Natural killer cell (primary cell): ENCODE measurements at regions of chr22 and their contacts with region 1.

Region 1: GRCh38 chr22:20211997-20212753 is 55.9 kb downstream of the RTN4R start:
- DNase-seq: no peak
- ATAC-seq: no peak
- H3K4me3 ChIP-seq: no peak overlapping the region
- H3K4me3 Mint-ChIP-seq: peak overlapping the region; percentile 53
- H3K27ac ChIP-seq: no peak overlapping the region
- H3K27ac Mint-ChIP-seq: peak overlapping the region in 1 of 2 donors; percentile 57
- H3K4me1 ChIP-seq: peaks cover 60% of the 10 kb centered on the region
- H3K4me1 Mint-ChIP-seq: peaks cover 21 to 62% of the 10 kb centered on the region in 2 donors
- H3K27me3 ChIP-seq: no peaks in the 10 kb centered on the region
- H3K27me3 Mint-ChIP-seq: no peaks in the 10 kb centered on the region
- CTCF ChIP-seq: no peak

Region 2: DNA sequence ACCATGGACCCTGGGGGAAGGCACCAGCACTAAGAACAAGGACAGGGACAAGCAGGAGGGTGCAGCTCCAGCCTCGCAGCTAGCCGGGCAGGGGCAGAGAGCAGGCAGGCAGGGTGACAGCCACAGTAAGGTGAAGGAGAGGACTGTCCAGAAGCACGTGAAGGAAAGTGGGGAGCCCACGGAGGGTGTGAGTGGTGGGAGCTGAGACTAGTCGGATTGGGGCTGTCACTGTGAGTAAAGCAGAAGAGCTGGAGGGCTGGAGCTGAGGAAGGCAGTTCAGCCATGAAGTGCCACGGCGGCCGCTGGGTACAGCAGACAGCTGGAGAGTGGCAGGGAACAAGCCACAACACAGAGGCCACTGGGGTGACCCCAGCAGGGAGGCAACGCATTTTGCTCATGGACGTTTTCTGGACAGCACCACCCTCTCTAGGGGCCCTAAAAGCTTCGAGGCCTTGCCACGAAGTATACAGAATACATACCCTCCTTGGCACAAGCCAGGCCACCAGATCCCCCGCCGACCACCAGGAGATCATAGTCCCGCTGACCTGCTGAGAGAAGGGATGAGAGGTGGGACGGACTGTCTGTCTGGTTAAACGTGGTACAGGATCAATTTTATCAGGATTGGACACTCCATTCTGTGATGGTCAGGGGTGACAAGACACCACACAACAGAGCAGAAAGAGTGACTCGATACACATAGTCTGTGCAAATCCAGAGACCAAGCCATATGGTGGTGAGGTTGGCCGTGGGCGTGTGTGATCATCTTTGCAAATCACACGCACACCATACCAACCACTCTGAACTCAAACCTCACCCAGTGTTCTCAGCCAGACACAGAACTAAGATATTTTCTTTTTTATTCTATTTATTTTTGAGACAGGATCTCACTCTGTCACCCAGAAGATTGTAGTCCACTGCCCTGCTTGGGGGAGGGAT is 281.4 kb before region 1 on chr22:
- intact Hi-C with region 1: no loop called
- DNase-seq: no peak
- ATAC-seq: no peak
- H3K4me3 ChIP-seq: no peak overlapping the region
- H3K4me3 Mint-ChIP-seq: no peak overlapping the region
- H3K27ac ChIP-seq: no peak overlapping the region
- H3K27ac Mint-ChIP-seq: no peak overlapping the region
- H3K4me1 ChIP-seq: no peaks in the 10 kb centered on the region
- H3K4me1 Mint-ChIP-seq: peaks cover 0 to 6% of the 10 kb centered on the region in 2 donors
- H3K27me3 ChIP-seq: no peaks in the 10 kb centered on the region
- H3K27me3 Mint-ChIP-seq: no peaks in the 10 kb centered on the region
- CTCF ChIP-seq: no peak

Region 3: DNA sequence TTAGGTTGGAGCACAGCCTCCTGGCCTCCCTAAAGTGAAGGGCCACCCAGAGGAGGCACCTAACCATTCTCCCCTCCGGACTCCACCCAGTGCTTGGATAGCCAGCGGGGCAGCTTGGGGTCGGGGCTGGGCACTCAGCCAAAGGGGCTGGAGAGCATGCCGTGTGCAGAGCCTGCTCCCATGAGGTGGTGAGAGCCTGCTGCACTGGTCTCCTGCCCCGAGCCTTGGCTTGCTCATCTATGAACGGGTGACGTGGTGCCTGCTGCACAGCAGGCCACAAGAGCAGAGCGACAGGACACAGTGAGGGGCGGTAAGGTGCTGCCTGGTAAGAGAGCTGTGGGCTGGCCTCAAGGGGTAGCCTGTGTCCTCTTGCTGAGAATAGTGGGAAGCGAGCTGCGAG is 47.3 kb before region 1 on chr22:
- intact Hi-C with region 1: loop called (anchors 10 kb)
- DNase-seq: no peak
- ATAC-seq: no peak
- H3K4me3 ChIP-seq: no peak overlapping the region
- H3K4me3 Mint-ChIP-seq: no peak overlapping the region
- H3K27ac ChIP-seq: no peak overlapping the region
- H3K27ac Mint-ChIP-seq: no peak overlapping the region
- H3K4me1 ChIP-seq: no peaks in the 10 kb centered on the region
- H3K4me1 Mint-ChIP-seq: peaks cover 0 to 6% of the 10 kb centered on the region in 2 donors
- H3K27me3 ChIP-seq: no peaks in the 10 kb centered on the region
- H3K27me3 Mint-ChIP-seq: peaks cover 0 to 3% of the 10 kb centered on the region in 2 donors
- CTCF ChIP-seq: no peak